ENCODE measurements at regions of chr1 and their contacts with region 1.

Region 1: GRCh38 chr1:30779294-30780071 is 21.9 kb upstream of the LAPTM5 start:
- DNase-seq: peak; percentile 88
- H3K4me3 ChIP-seq: peak overlapping the region in 1 of 2 experiments; percentile 37; a peak in 1 of 4 replicates
- H3K27ac ChIP-seq: peak overlapping the region in 1 of 2 experiments; percentile 86; a peak in 2 of 4 replicates
- H3K4me1 ChIP-seq: peaks cover 0 to 20% of the 10 kb centered on the region in 2 experiments; a peak in 1 of 4 replicates
- H3K27me3 ChIP-seq: no peaks in the 10 kb centered on the region
- CTCF ChIP-seq: peak; percentile 92
- EP300 ChIP-seq: no peak
- RAD21 ChIP-seq: peak; percentile 89

Region 2: DNA sequence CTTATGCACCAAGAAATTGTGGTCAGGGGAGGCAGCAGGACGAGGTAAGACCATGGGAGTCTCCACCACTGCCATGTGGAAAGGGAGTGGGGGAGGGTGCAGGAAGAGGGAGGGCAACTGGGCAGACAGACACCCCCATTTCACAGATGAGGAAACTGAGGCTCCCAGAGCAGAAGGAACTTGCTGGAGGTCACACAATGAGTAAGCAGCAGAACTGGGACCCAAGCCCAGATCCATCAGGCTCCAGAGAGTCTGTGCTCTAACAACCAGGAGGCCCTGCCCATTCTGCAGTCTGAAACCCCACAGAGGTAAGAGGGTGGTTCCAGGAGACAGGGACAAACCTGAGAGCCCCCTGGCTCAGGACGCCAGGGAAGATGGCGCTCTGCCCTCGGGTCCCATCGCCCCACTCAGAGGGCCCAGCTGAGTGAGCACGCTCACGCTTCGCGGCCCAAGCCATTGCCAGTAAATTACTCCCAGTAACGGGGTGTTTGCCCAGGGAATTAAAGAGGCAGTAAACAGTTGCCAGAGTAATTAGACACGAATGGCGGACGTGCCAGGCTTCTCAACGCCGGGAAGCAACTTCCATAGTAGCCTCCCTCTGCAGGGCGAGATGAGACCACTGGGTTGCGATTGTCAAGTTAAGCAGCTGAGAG is 115.3 kb before region 1 on chr1:
- CTCF ChIA-PET with region 1: no interaction called
- POLR2A ChIA-PET with region 1: no interaction called
- DNase-seq: no peak
- H3K4me3 ChIP-seq: no peak overlapping the region
- H3K27ac ChIP-seq: no peak overlapping the region
- H3K4me1 ChIP-seq: peaks cover 0 to 11% of the 10 kb centered on the region in 2 experiments; a peak in 1 of 4 replicates
- H3K27me3 ChIP-seq: no peaks in the 10 kb centered on the region
- CTCF ChIP-seq: no peak
- EP300 ChIP-seq: no peak
- RAD21 ChIP-seq: no peak

Region 3: GRCh38 chr1:30704765-30705509 is 74.5 kb before region 1 on chr1:
- CTCF ChIA-PET with region 1: no interaction called
- POLR2A ChIA-PET with region 1: no interaction called
- DNase-seq: no peak
- H3K4me3 ChIP-seq: no peak overlapping the region
- H3K27ac ChIP-seq: no peak overlapping the region
- H3K4me1 ChIP-seq: peaks cover 6 to 11% of the 10 kb centered on the region in 2 experiments; a peak in 2 of 4 replicates
- H3K27me3 ChIP-seq: no peaks in the 10 kb centered on the region
- CTCF ChIP-seq: no peak
- EP300 ChIP-seq: no peak
- RAD21 ChIP-seq: no peak

Region 4: DNA sequence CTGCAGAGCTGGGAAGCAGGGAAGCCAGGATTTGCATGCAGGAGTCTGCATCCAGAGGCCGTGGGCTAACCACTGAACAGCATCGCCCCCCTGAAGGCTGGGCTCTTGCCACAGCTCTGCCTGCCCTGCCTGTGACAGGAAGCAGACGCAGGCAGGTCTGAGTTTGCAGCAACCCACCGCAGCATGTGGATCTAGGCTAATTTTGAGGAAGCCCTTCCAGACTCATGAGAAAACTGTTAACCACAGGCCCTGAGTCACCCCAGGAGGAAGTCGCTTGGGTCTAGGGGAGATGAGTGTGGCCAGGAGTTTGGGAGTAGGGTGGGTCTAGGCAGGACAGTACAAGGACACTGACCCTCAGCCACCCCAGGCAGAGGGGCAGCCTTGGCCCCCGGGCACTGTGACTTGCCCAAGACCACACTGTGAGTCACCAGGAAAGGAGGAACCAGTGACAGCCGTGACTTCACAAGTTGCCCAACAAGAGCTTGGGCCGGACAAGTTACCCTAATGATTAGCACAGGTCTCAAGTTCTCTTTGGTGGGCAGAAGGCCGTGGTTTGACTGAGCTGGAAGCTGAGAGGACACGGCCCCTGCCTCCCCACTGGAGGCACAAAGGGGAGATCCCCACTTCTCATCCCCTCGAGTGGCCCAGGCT is 22.8 kb before region 1 on chr1:
- CTCF ChIA-PET with region 1: interaction called, 24 read pairs
- POLR2A ChIA-PET with region 1: no interaction called
- DNase-seq: no peak
- H3K4me3 ChIP-seq: no peak overlapping the region
- H3K27ac ChIP-seq: peak overlapping the region in 1 of 2 experiments; percentile 14; a peak in 1 of 4 replicates
- H3K4me1 ChIP-seq: peaks cover 3 to 5% of the 10 kb centered on the region in 2 experiments; a peak in 2 of 4 replicates
- H3K27me3 ChIP-seq: no peaks in the 10 kb centered on the region
- CTCF ChIP-seq: no peak
- EP300 ChIP-seq: no peak
- RAD21 ChIP-seq: no peak

Region 5: DNA sequence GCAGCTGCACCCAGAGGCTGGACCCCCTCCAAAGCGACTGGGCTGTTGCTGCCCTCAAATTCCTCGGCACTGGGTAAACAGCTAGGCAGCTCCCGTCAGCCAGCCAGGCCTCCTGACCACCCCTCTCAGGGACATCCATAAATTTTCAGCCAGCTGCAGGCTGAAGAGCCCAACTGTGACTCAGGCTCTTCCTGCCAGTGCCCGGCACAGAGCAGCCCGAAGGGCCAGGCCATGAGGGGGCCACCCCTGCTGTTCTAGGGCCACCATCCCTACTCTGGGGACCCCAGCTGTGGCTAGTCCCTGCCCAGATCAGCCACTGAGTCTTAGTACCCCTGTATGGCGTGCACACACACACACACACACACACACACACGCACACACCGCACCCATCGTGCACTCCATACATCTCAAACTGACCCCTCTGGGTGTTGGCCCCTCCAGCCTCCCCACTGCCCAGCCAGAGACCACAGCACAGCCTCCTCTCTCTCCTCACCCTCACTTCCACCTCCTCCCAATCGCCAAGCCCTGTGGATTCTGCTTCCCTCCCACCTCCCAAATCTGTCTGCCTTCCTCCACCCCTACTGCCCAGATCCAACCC is 15.7 kb before region 1 on chr1:
- CTCF ChIA-PET with region 1: interaction called, 24 read pairs
- POLR2A ChIA-PET with region 1: no interaction called
- DNase-seq: no peak
- H3K4me3 ChIP-seq: no peak overlapping the region
- H3K27ac ChIP-seq: no peak overlapping the region
- H3K4me1 ChIP-seq: peaks cover 7 to 17% of the 10 kb centered on the region in 2 experiments; a peak in 2 of 4 replicates
- H3K27me3 ChIP-seq: no peaks in the 10 kb centered on the region
- CTCF ChIP-seq: no peak
- EP300 ChIP-seq: no peak
- RAD21 ChIP-seq: no peak

Region 6: GRCh38 chr1:30768830-30769718 is 10.4 kb before region 1 on chr1:
- CTCF ChIA-PET with region 1: interaction called, 11 read pairs
- POLR2A ChIA-PET with region 1: no interaction called
- DNase-seq: peak; percentile 75
- H3K4me3 ChIP-seq: no peak overlapping the region
- H3K27ac ChIP-seq: no peak overlapping the region; a peak in 1 of 4 replicates
- H3K4me1 ChIP-seq: peaks cover 0 to 6% of the 10 kb centered on the region in 2 experiments; a peak in 1 of 4 replicates
- H3K27me3 ChIP-seq: no peaks in the 10 kb centered on the region
- CTCF ChIP-seq: no peak
- EP300 ChIP-seq: no peak
- RAD21 ChIP-seq: no peak

Region 7: GRCh38 chr1:30919025-30919881 is 139.8 kb after region 1 on chr1:
- CTCF ChIA-PET with region 1: interaction called, 215 read pairs
- POLR2A ChIA-PET with region 1: no interaction called
- DNase-seq: no peak
- H3K4me3 ChIP-seq: no peak overlapping the region
- H3K27ac ChIP-seq: no peak overlapping the region; a peak in 2 of 4 replicates
- H3K4me1 ChIP-seq: peaks cover 6 to 12% of the 10 kb centered on the region in 2 experiments; a peak in 3 of 4 replicates
- H3K27me3 ChIP-seq: no peaks in the 10 kb centered on the region
- CTCF ChIP-seq: no peak
- EP300 ChIP-seq: 0 out of 4 replicates have a peak, but pooled peaks of 1 of the 2 experiments have one; percentile 17
- RAD21 ChIP-seq: no peak

Region 8: DNA sequence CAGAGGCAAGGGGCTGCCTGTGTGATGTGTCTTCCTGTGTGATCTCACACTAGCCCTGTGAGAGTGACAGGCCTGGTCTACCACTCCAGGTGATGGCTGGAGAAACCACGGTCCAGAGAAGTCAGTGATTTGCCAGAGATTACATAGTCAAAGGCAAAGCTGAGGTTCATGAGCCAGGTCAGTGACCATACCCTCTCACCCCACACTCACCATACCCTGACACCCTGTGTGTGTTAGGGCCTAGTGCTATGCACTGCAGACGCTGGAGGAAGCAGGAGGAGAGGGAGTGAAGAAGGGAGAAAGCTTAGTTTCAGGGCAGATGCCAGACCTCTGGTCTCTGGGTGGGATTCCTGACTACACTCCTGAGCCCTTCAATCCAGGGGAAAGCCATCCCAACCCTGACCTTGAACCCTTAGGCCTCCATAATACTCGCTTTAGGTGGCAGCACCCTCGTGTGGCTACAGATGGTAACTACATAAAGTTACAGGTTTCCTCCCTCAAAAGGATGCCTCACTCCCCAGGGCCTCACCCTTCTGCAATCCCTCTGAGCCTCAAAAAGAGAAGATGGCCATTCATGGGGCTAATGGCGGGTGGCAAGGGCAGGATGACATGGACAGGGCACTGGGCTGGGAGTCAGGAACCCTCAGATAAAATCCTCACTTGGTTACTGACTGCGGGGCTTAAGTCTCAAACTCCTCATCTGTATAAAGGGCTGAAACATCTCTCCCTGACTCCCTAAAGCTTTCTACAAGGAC is 149.8 kb after region 1 on chr1:
- CTCF ChIA-PET with region 1: interaction called, 66 read pairs
- POLR2A ChIA-PET with region 1: no interaction called
- DNase-seq: peak; percentile 70
- H3K4me3 ChIP-seq: peak overlapping the region in 1 of 2 experiments; percentile 32; a peak in 1 of 4 replicates
- H3K27ac ChIP-seq: peak overlapping the region in 1 of 2 experiments; percentile 31; a peak in 1 of 4 replicates
- H3K4me1 ChIP-seq: peaks cover 0 to 13% of the 10 kb centered on the region in 2 experiments; a peak in 1 of 4 replicates
- H3K27me3 ChIP-seq: no peaks in the 10 kb centered on the region
- CTCF ChIP-seq: peak; percentile 78
- EP300 ChIP-seq: no peak
- RAD21 ChIP-seq: peak; percentile 77